CD8-positive, alpha-beta T cell (primary cell): ENCODE measurements at regions of chr17 and their contacts with region 1.

Region 1: GRCh38 chr17:17641621-17642409 is 39.4 kb upstream of the RAI1 start:
- DNase-seq: peak; percentile 59 to 90 (median 82)
- ATAC-seq: peak; percentile 92
- H3K4me3 ChIP-seq: no peak overlapping the region
- H3K4me3 Mint-ChIP-seq: no peak overlapping the region
- H3K27ac ChIP-seq: no peak overlapping the region
- H3K27ac Mint-ChIP-seq: no peak overlapping the region
- H3K4me1 ChIP-seq: no peaks in the 10 kb centered on the region
- H3K4me1 Mint-ChIP-seq: peaks cover 2% of the 10 kb centered on the region
- H3K27me3 ChIP-seq: no peaks in the 10 kb centered on the region
- H3K27me3 Mint-ChIP-seq: peaks cover 6% of the 10 kb centered on the region
- CTCF ChIP-seq: peak; percentile 75

Region 2: GRCh38 chr17:17001874-17002520 is 639.8 kb before region 1 on chr17:
- CTCF ChIA-PET with region 1: interaction called, 3 read pairs
- POLR2A ChIA-PET with region 1: no interaction called
- intact Hi-C with region 1: loop called in 1 of 2 experiments (anchors 5 kb)
- DNase-seq: peak; percentile 58 to 86 (median 77)
- ATAC-seq: peak; percentile 98
- H3K4me3 ChIP-seq: no peak overlapping the region
- H3K4me3 Mint-ChIP-seq: no peak overlapping the region
- H3K27ac ChIP-seq: no peak overlapping the region
- H3K27ac Mint-ChIP-seq: no peak overlapping the region
- H3K4me1 ChIP-seq: no peaks in the 10 kb centered on the region
- H3K4me1 Mint-ChIP-seq: peaks cover 1% of the 10 kb centered on the region
- H3K27me3 ChIP-seq: no peaks in the 10 kb centered on the region
- H3K27me3 Mint-ChIP-seq: no peaks in the 10 kb centered on the region
- CTCF ChIP-seq: peak; percentile 89

Region 3: DNA sequence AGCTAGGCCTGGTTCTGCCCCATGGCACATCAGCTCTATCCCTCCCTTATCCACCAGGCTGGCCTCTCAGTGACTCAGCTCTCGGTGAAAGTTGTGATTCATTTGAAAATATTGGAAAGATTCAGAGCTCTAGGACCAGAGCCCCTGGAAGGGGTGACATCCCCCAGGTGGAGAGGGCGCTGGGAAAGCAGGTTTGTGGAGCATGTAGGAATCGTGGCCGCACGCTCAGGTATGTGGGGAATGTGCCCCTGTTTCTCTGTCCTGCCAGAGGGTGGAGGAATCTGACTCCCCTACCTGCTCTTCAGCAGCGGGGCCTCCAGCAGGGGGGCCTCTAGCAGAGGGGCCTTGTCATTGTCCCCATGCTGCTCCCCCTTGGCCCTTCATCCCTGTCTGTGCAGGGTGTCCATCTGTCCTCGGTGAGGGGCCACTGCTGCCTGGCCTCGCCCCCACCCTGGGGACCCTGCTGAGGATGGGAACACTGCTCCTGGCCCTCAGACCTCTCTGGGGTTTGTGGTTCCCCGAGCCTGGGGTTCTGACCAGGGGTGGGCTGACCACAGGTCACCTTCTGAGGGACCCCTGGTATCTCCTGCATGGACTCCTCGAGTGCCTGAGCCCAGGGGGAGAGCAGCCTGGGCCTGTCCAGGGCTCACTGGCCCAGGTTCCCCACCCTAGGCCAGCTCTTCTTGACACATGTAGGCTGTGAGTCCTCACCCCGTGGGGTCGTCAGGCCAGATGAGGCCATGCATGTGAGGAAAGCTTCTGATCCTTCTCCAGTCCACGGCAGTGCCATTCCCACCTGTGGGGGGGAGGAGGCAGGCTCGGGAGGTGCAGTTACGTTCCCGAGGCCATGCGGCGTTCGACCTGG is 291.1 kb before region 1 on chr17:
- CTCF ChIA-PET with region 1: interaction called, 179 read pairs
- POLR2A ChIA-PET with region 1: no interaction called
- intact Hi-C with region 1: loop called (anchors 1 kb)
- DNase-seq: no peak
- ATAC-seq: no peak
- H3K4me3 ChIP-seq: no peak overlapping the region
- H3K4me3 Mint-ChIP-seq: no peak overlapping the region
- H3K27ac ChIP-seq: no peak overlapping the region
- H3K27ac Mint-ChIP-seq: no peak overlapping the region
- H3K4me1 ChIP-seq: no peaks in the 10 kb centered on the region
- H3K4me1 Mint-ChIP-seq: peaks cover 4% of the 10 kb centered on the region
- H3K27me3 ChIP-seq: no peaks in the 10 kb centered on the region
- H3K27me3 Mint-ChIP-seq: no peaks in the 10 kb centered on the region
- CTCF ChIP-seq: no peak

Region 4: DNA sequence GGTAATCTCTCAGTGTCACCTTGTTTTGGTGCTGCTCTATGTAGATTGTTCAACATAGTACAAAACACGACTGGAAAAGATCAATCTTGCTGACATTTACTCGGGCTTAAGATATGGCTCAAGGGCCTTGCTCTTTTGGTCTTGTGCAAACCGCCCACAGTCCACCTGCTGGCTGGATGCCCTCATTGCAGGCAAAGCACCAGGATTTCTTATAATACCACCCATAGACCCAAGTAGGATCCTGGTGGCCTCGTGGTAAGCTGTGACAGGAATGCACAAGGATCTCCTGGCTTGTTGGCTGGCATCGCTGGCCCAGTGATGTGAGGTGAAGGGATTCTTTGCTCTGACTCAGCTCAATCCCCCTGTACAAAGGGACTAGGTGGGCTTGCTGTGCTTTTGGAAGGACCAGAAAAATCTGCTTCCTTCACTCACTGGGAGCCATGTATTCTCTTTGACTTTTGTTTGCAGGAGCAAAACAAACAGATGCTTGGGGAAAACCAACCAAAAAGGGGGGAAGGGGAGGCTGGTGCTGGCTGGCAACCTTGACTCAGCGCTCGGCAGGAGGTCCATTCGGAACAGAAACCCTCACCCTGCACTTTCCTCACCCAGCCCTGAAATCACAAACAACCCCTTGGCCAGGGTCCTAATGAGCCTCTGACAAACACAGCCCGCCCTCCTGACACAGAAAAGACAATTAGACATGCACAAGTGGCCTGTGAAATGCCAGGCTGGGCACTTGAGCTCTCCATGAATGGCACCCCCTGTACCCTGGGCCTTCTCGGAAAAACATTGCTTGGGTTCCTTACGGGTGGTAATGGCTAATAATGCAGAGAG is 201.6 kb before region 1 on chr17:
- CTCF ChIA-PET with region 1: interaction called, 12 read pairs
- POLR2A ChIA-PET with region 1: no interaction called
- intact Hi-C with region 1: loop called (anchors 1 to 2 kb)
- DNase-seq: peak; percentile 59 to 89 (median 79)
- ATAC-seq: peak; percentile 87
- H3K4me3 ChIP-seq: no peak overlapping the region
- H3K4me3 Mint-ChIP-seq: no peak overlapping the region
- H3K27ac ChIP-seq: no peak overlapping the region
- H3K27ac Mint-ChIP-seq: no peak overlapping the region
- H3K4me1 ChIP-seq: peaks cover 5% of the 10 kb centered on the region
- H3K4me1 Mint-ChIP-seq: peaks cover 8% of the 10 kb centered on the region
- H3K27me3 ChIP-seq: no peaks in the 10 kb centered on the region
- H3K27me3 Mint-ChIP-seq: no peaks in the 10 kb centered on the region
- CTCF ChIP-seq: peak; percentile 87

Region 5: DNA sequence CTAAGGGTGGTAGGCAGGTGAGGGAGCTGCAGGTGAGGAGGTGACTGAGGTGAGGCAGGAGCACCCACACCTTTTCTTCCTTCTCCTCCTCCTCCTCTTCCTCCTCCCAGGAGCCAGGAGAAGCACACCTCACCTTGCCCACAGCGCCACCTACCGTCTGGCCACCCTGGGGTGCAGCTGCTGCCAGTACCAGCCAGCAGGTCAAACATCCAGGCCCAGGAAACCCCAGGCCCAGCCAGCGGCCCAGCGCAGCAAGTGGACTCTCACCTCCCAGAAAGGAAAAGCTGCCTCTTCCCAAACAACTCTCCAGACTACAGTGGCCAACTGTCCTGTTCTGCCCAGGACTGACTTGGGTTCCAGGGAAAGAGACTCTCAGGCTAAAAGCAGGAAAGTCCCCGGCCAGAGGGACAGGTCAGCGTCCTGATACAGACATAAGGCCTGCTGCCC is 73.0 kb before region 1 on chr17:
- CTCF ChIA-PET with region 1: interaction called, 10 read pairs
- POLR2A ChIA-PET with region 1: no interaction called
- intact Hi-C with region 1: no loop called
- DNase-seq: peak; percentile 11 to 69 (median 50)
- ATAC-seq: no peak
- H3K4me3 ChIP-seq: no peak overlapping the region
- H3K4me3 Mint-ChIP-seq: no peak overlapping the region
- H3K27ac ChIP-seq: no peak overlapping the region
- H3K27ac Mint-ChIP-seq: no peak overlapping the region
- H3K4me1 ChIP-seq: no peaks in the 10 kb centered on the region
- H3K4me1 Mint-ChIP-seq: no peaks in the 10 kb centered on the region
- H3K27me3 ChIP-seq: no peaks in the 10 kb centered on the region
- H3K27me3 Mint-ChIP-seq: no peaks in the 10 kb centered on the region
- CTCF ChIP-seq: peak; percentile 39